Dendritic cell treated with granulocyte-macrophage colony-stimulating factor and Interleukin-4, amounts not matched to agents 40 ng/mL and 50 ng/mL, for 4 days (primary cell): ENCODE measurements at regions of chr16 and their contacts with region 1.

Region 1: DNA sequence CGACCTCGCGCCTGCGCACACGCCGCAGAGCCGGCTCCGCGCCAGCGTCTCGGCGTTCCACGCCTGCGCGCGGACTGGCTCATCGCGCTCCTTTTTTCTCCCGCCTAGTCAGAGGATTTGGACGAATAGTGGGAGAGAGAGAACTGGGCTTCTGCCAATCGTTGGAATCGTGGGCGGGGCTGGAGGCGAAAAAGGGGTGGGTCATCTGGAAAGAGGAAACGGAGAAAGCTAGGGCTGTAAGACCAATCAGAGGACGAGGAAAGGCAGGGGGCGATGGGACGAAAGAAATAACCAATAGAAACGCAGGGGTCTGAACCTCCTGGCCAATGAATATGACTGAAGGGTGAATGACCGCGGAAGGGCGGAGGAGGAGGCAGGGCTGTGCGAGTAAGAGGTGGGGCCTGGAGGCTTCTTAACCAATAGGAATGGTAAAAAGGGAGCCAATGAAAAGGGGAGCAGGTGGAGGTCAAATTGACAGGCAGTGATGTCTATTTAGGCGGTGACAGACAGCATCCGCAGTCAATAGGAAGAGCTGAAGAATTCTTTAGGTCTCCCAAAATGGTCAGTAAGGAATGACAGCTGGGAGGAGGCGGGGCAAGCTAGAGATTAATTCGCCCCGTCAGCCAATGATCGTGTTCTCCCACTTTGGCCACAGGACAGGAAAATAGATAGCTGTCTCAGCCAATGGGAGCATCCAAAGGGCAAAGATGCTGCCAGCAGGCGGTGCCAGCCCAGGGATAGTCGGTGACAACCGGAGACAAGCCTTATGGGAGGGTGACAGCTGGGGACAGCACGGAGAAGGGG is at the start of gene TBC1D10B:
- H3K4me3 Mint-ChIP-seq: peak within 1 kb of the TSS; percentile 89
- H3K27ac Mint-ChIP-seq: peak within 1 kb of the TSS; percentile 97
- H3K4me1 Mint-ChIP-seq: peaks cover 43% of the 10 kb centered on the region
- H3K27me3 Mint-ChIP-seq: no peaks in the 10 kb centered on the region

Region 2: DNA sequence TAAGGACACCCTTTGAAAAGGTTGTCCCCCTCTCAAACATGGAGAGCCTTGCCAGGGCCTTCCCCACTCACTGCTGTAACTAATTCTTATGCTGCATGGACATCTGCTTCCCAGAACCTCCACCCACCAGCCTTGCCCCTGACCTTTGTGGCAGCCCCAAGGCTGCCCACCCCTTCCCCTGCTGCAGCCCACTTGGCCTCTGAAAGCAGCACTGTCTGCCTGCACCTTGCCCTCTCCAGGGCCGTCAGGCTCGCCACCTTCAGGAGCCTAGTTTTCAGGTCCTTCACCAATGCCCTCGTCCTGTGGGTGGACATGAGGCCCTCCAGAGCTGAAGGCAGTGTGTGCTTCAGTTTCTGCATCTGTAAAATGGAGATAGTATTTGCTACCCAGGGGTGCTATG is 189.9 kb before region 1 on chr16:
- intact Hi-C with region 1: no loop called
- H3K4me3 Mint-ChIP-seq: no peak overlapping the region
- H3K27ac Mint-ChIP-seq: no peak overlapping the region
- H3K4me1 Mint-ChIP-seq: peaks cover 39% of the 10 kb centered on the region
- H3K27me3 Mint-ChIP-seq: peaks cover 3% of the 10 kb centered on the region

Region 3: DNA sequence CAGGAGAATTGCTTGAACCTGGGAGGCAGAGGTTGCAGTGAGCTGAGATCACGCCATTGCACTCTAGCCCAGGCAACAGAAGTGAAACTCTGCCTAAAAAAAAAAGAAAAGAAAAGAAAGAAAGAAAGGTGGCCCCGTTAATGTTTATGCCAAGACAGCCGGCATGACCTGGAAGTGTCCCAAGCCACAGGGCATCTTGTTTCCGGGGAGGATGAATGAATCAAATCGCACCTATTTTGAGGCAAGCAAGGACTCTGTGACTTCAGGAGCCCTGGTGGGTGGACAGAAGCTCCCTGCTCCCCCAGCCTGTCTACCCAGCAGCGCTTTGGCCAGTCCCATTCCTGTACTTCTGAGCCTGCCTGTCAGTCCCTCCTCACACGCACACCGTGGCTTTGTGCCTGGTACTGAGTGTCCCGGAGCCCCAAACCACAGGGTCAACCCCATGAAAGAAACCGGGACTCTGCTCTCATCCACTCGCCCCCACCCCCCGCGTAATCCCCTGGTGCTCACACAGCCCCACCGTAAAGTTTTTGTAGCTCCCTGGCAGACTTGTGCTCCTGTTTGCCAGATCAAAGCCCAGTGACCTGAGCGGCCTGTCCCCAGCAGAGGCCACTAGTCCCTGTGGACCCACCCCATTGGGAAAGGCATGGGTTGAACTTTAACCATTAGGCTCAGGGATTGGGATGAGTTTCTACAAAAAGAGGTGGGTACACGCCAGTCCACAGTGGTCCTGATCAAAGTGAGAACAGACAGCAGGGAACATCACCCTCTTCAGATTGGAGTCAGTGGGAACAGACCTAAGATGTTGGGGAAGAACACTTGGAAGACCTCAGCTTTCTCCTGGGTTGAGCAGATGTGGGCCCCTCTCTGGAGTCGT is 34.8 kb before region 1 on chr16:
- intact Hi-C with region 1: loop called (anchors 2 kb)
- H3K4me3 Mint-ChIP-seq: peak overlapping the region; percentile 80
- H3K27ac Mint-ChIP-seq: peak overlapping the region; percentile 92
- H3K4me1 Mint-ChIP-seq: peaks cover 20% of the 10 kb centered on the region
- H3K27me3 Mint-ChIP-seq: no peaks in the 10 kb centered on the region

Region 4: DNA sequence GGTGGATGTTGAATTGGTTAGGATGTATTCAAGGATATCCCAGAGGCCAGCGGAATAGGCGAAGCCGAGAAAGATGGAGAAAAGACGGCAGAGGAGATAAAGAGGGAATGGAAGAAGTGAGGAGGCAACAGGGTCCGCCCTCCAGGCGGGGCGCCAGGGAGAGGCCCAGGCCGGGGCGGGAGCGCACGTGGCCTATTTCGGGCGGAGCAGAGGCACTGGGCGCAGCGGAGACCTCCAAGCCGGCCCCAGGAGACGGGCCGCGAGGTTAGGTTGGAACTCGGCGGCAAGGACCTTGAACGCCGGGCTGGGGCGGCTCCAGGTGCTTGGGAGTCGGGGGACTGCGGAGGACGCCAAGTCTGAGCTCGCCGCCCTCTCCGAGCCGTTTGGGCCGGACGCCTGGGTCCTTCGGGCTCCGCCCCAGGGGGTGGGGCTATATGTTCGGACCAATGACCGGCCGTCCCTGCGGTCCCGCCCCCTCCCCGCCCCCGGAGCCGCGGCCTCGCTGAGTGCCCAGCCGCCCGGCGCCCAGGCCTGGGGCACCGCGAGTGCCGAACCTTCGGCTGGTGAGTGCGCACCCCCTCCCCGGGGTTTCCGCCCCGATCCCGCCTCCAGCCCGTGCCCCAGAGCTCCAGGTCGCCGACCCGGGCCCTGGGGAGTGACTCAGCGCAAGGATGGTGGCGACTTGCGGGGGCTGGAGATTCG is 36.6 kb after region 1 on chr16 and contains the start of gene ZNF771:
- intact Hi-C with region 1: loop called (anchors 5 kb)
- H3K4me3 Mint-ChIP-seq: peak within 1 kb of the TSS; percentile 79
- H3K27ac Mint-ChIP-seq: peak within 1 kb of the TSS; percentile 59
- H3K4me1 Mint-ChIP-seq: peaks cover 50% of the 10 kb centered on the region
- H3K27me3 Mint-ChIP-seq: peaks cover 1% of the 10 kb centered on the region